ENCODE measurements at regions of chrX and their contacts with region 1.

Region 1: GRCh38 chrX:24515447-24515846 is 50.4 kb downstream of the PDK3 start:
- DNase-seq: no peak
- H3K4me3 Mint-ChIP-seq: no peak overlapping the region
- H3K27ac Mint-ChIP-seq: no peak overlapping the region
- H3K4me1 Mint-ChIP-seq: peaks cover 23% of the 10 kb centered on the region
- H3K27me3 Mint-ChIP-seq: no peaks in the 10 kb centered on the region

Region 2: DNA sequence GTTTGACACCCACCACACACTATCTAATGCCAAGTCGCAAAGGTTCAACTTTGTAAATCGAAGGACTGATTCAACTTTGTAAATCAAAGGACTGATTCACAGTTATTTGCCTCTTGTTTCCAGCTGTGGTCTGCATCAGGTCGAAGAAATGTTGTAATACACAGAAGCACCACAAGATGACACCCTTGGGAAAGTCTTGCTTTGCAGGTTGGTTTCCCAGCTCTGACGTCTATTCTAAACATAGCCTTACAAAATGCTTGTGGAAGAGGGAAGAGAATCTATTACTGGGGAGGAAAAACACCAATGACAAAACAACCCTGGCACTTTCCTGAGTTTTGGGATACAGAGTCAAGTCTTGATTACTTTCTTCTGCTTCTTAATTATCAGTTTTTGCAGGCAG is 119.7 kb before region 1 on chrX:
- CTCF ChIA-PET with region 1: interaction called, 5 read pairs
- POLR2A ChIA-PET with region 1: no interaction called
- intact Hi-C with region 1: loop called (anchors 5 kb)
- DNase-seq: peak; percentile 39
- H3K4me3 Mint-ChIP-seq: no peak overlapping the region
- H3K27ac Mint-ChIP-seq: no peak overlapping the region
- H3K4me1 Mint-ChIP-seq: no peaks in the 10 kb centered on the region
- H3K27me3 Mint-ChIP-seq: peaks cover 2% of the 10 kb centered on the region

Region 3: GRCh38 chrX:24464836-24465531 is 50.5 kb before region 1 on chrX and contains the start of gene PDK3:
- CTCF ChIA-PET with region 1: no interaction called
- POLR2A ChIA-PET with region 1: interaction called, 3 read pairs
- intact Hi-C with region 1: loop called (anchors 5 kb)
- DNase-seq: peak; percentile 89
- H3K4me3 Mint-ChIP-seq: peak within 1 kb of the TSS; percentile 75
- H3K27ac Mint-ChIP-seq: peak within 1 kb of the TSS; percentile 85
- H3K4me1 Mint-ChIP-seq: peaks cover 35% of the 10 kb centered on the region
- H3K27me3 Mint-ChIP-seq: no peaks in the 10 kb centered on the region
- total RNA-seq, gene PDK3: 39.8 to 41.3 TPM

Region 4: DNA sequence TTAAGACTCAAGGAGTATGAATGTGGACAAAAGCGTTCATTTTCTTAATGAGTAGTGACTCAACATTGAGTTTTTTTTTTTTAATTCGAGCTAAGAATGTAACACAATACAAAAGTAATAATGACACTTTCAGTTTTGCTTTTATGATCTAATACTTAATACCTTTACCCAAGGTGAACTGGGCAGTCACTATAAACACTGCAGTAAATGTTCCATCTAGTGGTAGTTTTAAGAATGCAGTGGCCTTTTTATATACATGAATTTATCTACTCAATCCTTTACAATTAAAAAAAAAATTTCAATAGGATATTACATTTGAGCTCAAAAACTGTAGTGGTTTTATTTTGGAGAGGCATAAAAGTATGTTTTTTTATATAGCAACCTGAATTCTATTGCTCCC is 16.5 kb before region 1 on chrX:
- CTCF ChIA-PET with region 1: interaction called, 10 read pairs
- POLR2A ChIA-PET with region 1: no interaction called
- intact Hi-C with region 1: no loop called
- DNase-seq: no peak
- H3K4me3 Mint-ChIP-seq: no peak overlapping the region
- H3K27ac Mint-ChIP-seq: no peak overlapping the region
- H3K4me1 Mint-ChIP-seq: peaks cover 24% of the 10 kb centered on the region
- H3K27me3 Mint-ChIP-seq: no peaks in the 10 kb centered on the region

Region 5: DNA sequence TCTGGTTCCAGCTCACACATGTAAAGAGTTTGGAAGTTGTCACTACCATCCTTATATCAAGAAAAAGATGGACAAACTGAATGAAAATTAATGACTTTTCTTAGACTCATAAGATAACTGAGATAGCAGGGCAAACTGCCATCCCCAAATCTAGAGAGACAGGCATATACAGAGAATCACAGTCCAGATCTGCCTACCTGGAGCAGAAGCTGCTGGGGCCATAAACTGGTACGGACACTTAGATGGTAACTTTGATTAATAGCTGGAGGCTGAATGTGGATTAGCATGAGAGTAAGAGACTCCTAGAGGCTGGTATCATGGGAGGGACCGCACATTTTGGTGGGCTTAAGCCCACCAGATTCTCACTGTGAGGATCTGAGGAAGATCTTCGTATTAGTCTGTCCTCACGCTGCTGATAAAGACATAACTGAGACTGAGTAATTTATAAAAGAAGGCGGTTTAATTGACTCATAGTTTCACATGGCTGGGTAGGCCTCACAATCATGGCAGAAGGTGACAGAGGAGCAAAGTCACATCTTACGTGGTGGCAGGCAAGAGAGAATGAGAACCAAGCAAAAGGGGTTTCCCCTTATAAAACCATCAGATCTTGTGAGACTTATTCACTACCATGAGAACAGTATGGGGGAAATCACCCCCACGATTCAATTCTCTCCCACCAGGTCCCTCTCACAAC is 167.4 kb after region 1 on chrX:
- CTCF ChIA-PET with region 1: no interaction called
- POLR2A ChIA-PET with region 1: no interaction called
- intact Hi-C with region 1: loop called (anchors 5 kb)
- DNase-seq: peak; percentile 58
- H3K4me3 Mint-ChIP-seq: no peak overlapping the region
- H3K27ac Mint-ChIP-seq: peak overlapping the region; percentile 58
- H3K4me1 Mint-ChIP-seq: peaks cover 16% of the 10 kb centered on the region
- H3K27me3 Mint-ChIP-seq: peaks cover 2% of the 10 kb centered on the region

Measured in activated CD4-positive, alpha-beta memory T cell treated with anti-CD3 and anti-CD28 coated beads for 36 hours (primary cell).